A673 (cell line): ENCODE measurements at regions of chr1 and their contacts with region 1.

Region 1: GRCh38 chr1:90187323-90187585 is 192.3 kb downstream of the ZNF326 start:
- DNase-seq: no peak
- H3K4me3 ChIP-seq: no peak overlapping the region
- H3K27ac ChIP-seq: no peak overlapping the region
- H3K4me1 ChIP-seq: peaks cover 5% of the 10 kb centered on the region
- H3K27me3 ChIP-seq: no peaks in the 10 kb centered on the region
- CTCF ChIP-seq: no peak

Region 2: DNA sequence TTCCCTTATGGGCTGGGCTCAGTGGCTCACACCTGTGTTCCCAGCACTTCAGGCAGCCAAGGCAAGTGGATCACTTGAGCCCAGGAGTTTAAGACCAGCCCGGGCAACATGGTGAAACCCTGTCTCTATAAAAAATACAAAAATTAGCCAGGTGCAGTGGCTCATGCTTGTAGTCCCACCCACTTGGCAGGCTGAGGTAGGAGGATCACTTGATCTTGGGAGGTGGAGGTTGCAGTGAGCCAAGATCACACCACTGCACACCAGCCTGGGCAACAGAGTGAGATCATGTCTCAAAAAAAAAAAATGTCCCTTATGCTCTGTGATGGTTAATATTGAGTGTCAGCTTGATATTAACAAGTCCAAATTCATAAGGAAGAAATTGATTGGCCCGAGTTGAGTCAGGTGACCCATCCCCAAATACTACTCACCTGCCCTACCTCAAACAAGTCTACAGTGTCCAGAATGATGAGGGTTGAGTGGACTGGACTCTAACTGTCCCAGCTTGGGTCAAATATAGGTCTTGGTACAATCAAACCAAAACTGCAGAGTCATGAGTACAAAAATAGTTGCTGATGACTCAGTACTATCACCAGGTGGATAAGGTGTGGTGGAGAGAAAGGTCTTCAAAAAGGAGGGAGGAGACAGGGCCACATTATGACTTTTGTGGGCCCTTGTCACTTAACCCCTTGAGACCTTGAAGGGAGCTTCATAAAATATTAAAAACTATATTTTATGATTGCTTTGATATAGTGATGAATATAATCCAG is 31.4 kb before region 1 on chr1:
- CTCF ChIA-PET with region 1: no interaction called
- POLR2A ChIA-PET with region 1: interaction called, 20 read pairs
- intact Hi-C with region 1: no loop called
- DNase-seq: no peak
- H3K4me3 ChIP-seq: no peak overlapping the region
- H3K27ac ChIP-seq: no peak overlapping the region
- H3K4me1 ChIP-seq: no peaks in the 10 kb centered on the region
- H3K27me3 ChIP-seq: no peaks in the 10 kb centered on the region
- CTCF ChIP-seq: no peak